ENCODE measurements at regions of chr7 and their contacts with region 1.

Region 1: GRCh38 chr7:134646425-134647305 is at the start of gene BPGM:
- DNase-seq: peak; percentile 100

Region 2: GRCh38 chr7:134351424-134351823 is 295.2 kb before region 1 on chr7:
- CTCF ChIA-PET with region 1: no interaction called
- POLR2A ChIA-PET with region 1: no interaction called
- DNase-seq: no peak

Region 3: DNA sequence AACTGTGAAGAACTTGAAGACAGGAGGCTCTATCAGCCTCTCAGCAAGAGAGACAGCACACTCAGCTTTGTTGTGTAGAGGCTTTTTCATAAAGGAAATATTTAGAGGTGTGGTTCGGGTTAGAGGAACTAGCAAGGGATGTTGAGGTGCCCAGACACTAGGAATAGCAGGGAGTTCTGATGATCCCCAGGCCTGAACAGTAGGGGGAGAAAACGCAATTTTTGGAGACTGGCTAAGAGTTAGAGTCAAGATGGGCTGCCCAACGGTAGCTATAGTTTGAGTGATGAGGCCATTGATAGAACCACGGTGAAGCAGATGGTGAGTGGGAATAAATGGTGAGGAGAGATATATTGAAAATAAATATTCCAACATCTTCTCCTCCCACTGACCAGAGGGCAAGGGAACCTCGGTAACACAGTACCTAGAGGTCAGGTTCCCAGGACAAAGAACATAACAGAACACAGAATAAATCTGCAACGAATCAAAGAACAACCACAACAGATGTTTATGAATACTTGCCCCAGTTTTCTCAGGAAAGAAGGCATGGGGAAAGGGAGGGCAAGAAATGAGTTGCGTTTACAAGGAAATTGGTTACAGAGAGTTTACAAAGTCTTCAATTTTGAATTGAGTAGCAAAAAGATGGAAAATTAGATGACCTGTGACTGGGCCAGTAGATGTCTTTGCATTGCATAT is 24.2 kb before region 1 on chr7:
- CTCF ChIA-PET with region 1: no interaction called
- POLR2A ChIA-PET with region 1: no interaction called
- DNase-seq: no peak

Region 4: GRCh38 chr7:134632937-134633540 is 13.6 kb before region 1 on chr7:
- CTCF ChIA-PET with region 1: interaction called, 7 read pairs
- POLR2A ChIA-PET with region 1: interaction called, 31 read pairs
- DNase-seq: peak; percentile 75

Region 5: GRCh38 chr7:134657526-134657925 is 10.9 kb after region 1 on chr7:
- CTCF ChIA-PET with region 1: interaction called, 4 read pairs
- POLR2A ChIA-PET with region 1: interaction called, 16 read pairs
- DNase-seq: no peak

Region 6: DNA sequence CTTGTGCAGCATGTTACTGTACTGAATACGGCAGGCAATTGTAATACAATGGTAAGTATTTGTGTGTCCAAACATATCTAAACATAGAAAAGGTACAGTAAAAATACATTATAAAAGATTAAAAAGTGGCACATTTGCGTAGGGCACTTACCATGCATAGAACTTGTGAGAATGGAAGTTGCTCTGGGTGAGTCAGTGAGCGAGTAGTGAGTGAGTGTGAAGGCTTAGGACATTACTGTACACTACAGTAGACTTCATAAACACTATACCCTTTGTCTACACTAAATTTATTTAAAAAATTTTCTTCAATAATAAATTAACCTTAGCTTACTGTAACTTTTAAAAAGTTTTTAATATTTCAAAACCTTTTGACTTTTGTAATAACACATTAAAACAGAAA is 37.5 kb after region 1 on chr7:
- CTCF ChIA-PET with region 1: no interaction called
- POLR2A ChIA-PET with region 1: no interaction called
- DNase-seq: no peak